ENCODE measurements at regions of chr17 and their contacts with region 1.

Region 1: GRCh38 chr17:43170766-43171585 is at the start of gene NBR1:
- DNase-seq: peak; percentile 89 to 98 (median 96)
- H3K4me3 ChIP-seq: peak within 1 kb of the TSS; percentile 58 to 98 (median 82)
- H3K27ac ChIP-seq: peak within 1 kb of the TSS; percentile 90 to 100 (median 98)
- H3K27me3 ChIP-seq: no peaks in the 10 kb centered on the region
- CTCF ChIP-seq: peak in 39 of 56 donors; percentile 6 to 52 (median 32)
- total RNA-seq, gene NBR1: 77.1 to 121 (median 91.7) TPM

Region 2: DNA sequence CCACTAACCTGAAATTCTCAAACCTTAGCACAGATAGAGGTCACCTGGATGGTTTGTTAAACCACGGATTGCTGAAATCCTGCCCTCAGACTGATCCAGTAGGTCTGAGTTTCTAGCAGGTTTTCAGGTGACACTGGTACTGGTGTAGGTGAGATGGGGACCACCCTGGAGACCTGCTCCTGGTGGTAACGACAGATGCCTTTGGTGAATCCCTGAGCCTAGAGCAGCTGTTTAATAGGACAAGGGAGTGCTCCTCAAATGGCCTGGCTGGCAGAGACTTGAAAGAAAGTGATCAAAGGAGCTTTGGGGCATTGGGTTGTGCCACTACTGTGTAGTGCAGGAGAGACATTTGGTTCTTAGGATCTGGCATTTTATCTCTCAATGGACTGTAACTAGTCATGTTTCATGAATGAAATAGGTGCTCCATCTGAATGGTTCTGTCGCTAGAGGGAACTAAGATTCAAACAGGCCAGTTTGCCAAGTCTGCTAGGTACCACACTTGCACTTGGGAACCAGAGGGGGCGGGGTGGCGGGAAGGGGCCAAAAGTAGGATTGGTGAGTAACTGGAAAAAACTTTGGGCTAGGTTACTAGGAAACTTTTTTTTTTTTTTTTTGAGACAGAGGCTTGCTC is 167.3 kb before region 1 on chr17:
- intact Hi-C with region 1: loop called in 1 of 2 experiments (anchors 5 kb)
- DNase-seq: peak in 1 of 10 donors; percentile 18
- H3K4me3 ChIP-seq: no peak overlapping the region
- H3K27ac ChIP-seq: no peak overlapping the region
- H3K27me3 ChIP-seq: no peaks in the 10 kb centered on the region
- CTCF ChIP-seq: no peak

Region 3: GRCh38 chr17:43024407-43025289 is 146.3 kb before region 1 on chr17 and contains the start of gene RND2:
- intact Hi-C with region 1: loop called (anchors 2 to 5 kb)
- DNase-seq: peak; percentile 75 to 94 (median 91)
- H3K4me3 ChIP-seq: peak within 1 kb of the TSS; percentile 33 to 82 (median 67)
- H3K27ac ChIP-seq: peak within 1 kb of the TSS in 44 of 59 donors; percentile 10 to 84 (median 58)
- H3K27me3 ChIP-seq: no peaks in the 10 kb centered on the region
- CTCF ChIP-seq: peak; percentile 37 to 91 (median 83)
- total RNA-seq, gene RND2: 12.1 to 32.7 (median 19.2) TPM

Region 4: DNA sequence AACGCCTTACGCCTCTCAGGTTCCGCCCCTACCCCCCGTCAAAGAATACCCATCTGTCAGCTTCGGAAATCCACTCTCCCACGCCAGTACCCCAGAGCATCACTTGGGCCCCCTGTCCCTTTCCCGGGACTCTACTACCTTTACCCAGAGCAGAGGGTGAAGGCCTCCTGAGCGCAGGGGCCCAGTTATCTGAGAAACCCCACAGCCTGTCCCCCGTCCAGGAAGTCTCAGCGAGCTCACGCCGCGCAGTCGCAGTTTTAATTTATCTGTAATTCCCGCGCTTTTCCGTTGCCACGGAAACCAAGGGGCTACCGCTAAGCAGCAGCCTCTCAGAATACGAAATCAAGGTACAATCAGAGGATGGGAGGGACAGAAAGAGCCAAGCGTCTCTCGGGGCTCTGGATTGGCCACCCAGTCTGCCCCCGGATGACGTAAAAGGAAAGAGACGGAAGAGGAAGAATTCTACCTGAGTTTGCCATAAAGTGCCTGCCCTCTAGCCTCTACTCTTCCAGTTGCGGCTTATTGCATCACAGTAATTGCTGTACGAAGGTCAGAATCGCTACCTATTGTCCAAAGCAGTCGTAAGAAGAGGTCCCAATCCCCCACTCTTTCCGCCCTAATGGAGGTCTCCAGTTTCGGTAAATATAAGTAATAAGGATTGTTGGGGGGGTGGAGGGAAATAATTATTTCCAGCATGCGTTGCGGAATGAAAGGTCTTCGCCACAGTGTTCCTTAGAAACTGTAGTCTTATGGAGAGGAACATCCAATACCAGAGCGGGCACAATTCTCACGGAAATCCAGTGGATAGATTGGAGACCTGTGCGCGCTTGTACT is 45.6 kb before region 1 on chr17 and contains the start of gene BRCA1:
- intact Hi-C with region 1: loop called (anchors 2 kb)
- DNase-seq: peak; percentile 67 to 94 (median 90)
- H3K4me3 ChIP-seq: peak within 1 kb of the TSS; percentile 57 to 95 (median 78)
- H3K27ac ChIP-seq: peak within 1 kb of the TSS in 49 of 59 donors; percentile 4 to 88 (median 72)
- H3K27me3 ChIP-seq: no peaks in the 10 kb centered on the region
- CTCF ChIP-seq: peak in 31 of 56 donors; percentile 9 to 47 (median 26)
- total RNA-seq, gene BRCA1: 3.9 to 29.8 (median 9.9) TPM

Region 5: GRCh38 chr17:43316522-43317142 is 145.7 kb after region 1 on chr17:
- intact Hi-C with region 1: loop called in 1 of 2 experiments (anchors 5 kb)
- DNase-seq: peak in 1 of 10 donors; percentile 15
- H3K4me3 ChIP-seq: no peak overlapping the region
- H3K27ac ChIP-seq: peak overlapping the region in 2 of 59 donors; percentile 18 to 50
- H3K27me3 ChIP-seq: no peaks in the 10 kb centered on the region
- CTCF ChIP-seq: no peak

Region 6: GRCh38 chr17:43338886-43339516 is 168.0 kb after region 1 on chr17:
- intact Hi-C with region 1: loop called in 1 of 2 experiments (anchors 5 kb)
- DNase-seq: peak; percentile 86 to 96 (median 89)
- H3K4me3 ChIP-seq: peak overlapping the region in 3 of 59 donors; percentile 2 to 19 (median 11)
- H3K27ac ChIP-seq: peak overlapping the region in 51 of 59 donors; percentile 26 to 91 (median 76)
- H3K27me3 ChIP-seq: no peaks in the 10 kb centered on the region
- CTCF ChIP-seq: peak; percentile 50 to 93 (median 82)

Region 7: DNA sequence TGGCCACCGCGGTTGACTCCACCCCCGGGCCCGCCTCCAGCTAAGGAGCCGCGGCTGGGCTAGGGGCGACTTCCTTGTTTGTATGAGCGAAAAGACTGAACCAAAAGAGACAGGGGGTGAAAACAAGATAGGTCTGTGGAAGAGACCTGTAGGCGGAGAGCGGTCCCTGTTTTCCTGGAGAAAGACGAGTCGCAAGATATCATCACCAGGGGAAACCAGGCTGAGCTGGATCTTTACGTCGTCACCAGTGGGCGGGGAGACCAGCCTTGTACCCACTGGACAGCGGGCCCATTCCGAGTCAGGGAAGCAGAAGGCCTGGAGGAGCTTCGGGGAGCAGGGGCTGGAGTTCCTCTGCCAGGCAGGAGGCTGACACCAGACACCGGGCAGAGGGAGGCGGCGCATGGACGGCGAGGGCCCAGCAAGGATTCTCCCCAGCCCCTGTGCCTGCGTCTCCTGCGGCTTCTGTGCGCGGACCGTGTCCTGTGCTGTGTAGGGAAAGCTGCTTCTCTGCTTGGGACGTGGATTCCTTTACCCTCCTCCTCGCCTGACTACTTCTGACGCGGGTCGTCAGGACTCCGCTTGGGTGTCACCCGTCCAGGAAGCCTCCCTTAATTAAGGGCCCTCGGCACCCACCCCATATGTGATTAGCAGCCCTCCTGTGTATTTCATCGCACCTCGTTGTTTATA is 217.5 kb after region 1 on chr17:
- intact Hi-C with region 1: loop called in 1 of 2 experiments (anchors 5 kb)
- DNase-seq: peak; percentile 80 to 96 (median 93)
- H3K4me3 ChIP-seq: peak overlapping the region; percentile 50 to 98 (median 78)
- H3K27ac ChIP-seq: peak overlapping the region; percentile 87 to 100 (median 98)
- H3K27me3 ChIP-seq: no peaks in the 10 kb centered on the region
- CTCF ChIP-seq: peak in 24 of 56 donors; percentile 4 to 48 (median 20)

Measured in dorsolateral prefrontal cortex (tissue), 120 donors.